ENCODE measurements at regions of chr1 and their contacts with region 1.

Region 1: DNA sequence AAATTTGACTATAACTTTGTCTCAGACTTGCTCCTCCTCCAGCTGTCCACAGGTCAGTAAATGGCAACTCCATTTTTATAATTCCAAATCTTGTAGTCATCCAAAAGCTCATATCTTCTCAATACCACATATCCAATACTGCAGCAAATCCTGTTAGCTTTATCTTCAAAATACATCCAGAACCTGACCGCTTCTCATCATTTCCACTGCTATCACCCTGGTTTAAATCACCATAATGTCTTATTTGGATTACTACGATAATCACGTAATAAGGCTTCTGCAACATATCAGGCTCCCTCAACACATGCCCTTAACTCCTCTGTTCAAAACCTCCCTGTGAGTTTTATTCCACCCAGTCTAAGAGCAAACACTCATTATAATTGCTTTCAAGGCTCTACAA is 34.5 kb downstream of the ERO1B start:
- DNase-seq: no peak
- ATAC-seq: no peak

Region 2: GRCh38 chr1:235954306-235955283 is 292.7 kb before region 1 on chr1:
- intact Hi-C with region 1: no loop called
- DNase-seq: no peak
- ATAC-seq: peak; percentile 71

Region 3: GRCh38 chr1:236320671-236321070 is 73.4 kb after region 1 on chr1:
- intact Hi-C with region 1: loop called (anchors 2 kb)
- DNase-seq: no peak
- ATAC-seq: no peak